Activated CD4-positive, alpha-beta T cell treated with anti-CD3 and anti-CD28 coated beads, Interleukin-2, amount 10 ng/mL, durations not matched to agents 24 days and 14 days (primary cell): ENCODE measurements at regions of chr12 and their contacts with region 1.

Region 1: DNA sequence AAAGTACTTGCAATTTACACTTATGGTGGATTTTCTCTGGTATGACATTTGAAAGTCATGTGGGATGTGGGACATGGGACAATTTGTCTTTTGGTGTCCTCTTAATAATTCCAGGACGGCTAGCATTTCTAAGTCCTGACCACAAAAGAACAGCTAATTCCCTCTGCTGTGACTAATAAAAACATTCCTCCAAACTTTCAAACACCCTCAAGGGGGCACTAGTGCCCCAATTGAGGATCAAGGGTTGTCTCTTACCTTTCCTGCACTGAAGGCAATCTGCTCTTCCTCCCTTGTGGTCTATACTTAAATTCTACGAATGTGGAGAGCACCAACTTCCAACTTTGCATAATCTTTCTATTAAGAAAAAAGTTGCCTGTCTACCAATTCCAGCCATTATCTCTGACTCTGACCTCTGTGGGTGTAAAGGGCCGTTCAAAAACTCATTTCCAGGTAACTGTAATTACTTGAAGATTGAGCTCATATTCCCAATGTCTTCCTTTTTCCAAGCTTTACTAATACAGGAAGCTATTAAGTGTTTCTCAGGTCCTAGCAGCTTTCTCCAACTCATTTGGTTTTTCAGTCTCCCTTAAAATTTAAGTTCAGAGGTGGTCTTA is 210.2 kb downstream of the PTPRO start:
- DNase-seq: peak; percentile 89
- H3K4me3 Mint-ChIP-seq: no peak overlapping the region
- H3K27ac Mint-ChIP-seq: no peak overlapping the region
- H3K4me1 Mint-ChIP-seq: peaks cover 13% of the 10 kb centered on the region
- H3K27me3 Mint-ChIP-seq: peaks cover 18% of the 10 kb centered on the region

Region 2: GRCh38 chr12:15546102-15546701 is 13.7 kb after region 1 on chr12:
- intact Hi-C with region 1: loop called (anchors 2 kb)
- DNase-seq: peak; percentile 80
- H3K4me3 Mint-ChIP-seq: peak overlapping the region; percentile 58
- H3K27ac Mint-ChIP-seq: peak overlapping the region; percentile 87
- H3K4me1 Mint-ChIP-seq: peaks cover 42% of the 10 kb centered on the region
- H3K27me3 Mint-ChIP-seq: no peaks in the 10 kb centered on the region

Region 3: DNA sequence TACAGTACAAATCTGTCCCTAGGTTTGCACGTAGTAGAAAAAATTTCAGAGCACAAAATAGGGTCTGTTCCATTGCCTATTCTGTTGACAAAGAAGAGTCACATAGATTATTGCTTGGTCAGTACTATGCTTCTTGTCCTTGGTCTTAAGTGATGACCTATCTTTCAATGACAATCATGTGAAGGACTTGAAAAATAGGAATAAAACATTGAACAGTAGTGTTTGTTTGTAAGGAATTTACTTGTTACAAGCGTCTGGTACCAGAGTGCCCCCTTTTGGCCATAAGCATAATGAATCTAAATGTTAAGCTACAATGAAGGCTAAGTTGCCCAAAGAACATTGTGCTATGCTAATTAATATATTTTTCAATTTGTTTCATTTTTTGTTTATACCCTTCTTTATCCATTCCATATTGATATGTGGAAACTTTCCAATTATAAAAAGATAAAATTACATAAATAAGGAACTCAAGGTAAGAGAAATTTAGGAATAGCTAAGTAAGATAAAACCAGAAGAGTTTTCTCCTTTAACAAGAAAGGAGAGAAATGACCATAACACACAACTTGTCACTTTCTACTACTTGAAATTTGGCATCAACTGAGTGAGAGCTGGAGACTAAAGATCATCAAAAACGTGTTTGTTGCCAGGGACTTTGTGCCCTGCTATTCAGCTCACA is 52.0 kb after region 1 on chr12:
- intact Hi-C with region 1: loop called (anchors 1 kb)
- DNase-seq: peak; percentile 79
- H3K4me3 Mint-ChIP-seq: no peak overlapping the region
- H3K27ac Mint-ChIP-seq: no peak overlapping the region
- H3K4me1 Mint-ChIP-seq: peaks cover 13% of the 10 kb centered on the region
- H3K27me3 Mint-ChIP-seq: no peaks in the 10 kb centered on the region

Region 4: GRCh38 chr12:15789220-15790171 is 257.0 kb after region 1 on chr12 and contains the start of gene EPS8:
- intact Hi-C with region 1: loop called (anchors 1 kb)
- DNase-seq: peak; percentile 96
- H3K4me3 Mint-ChIP-seq: peak within 1 kb of the TSS; percentile 87
- H3K27ac Mint-ChIP-seq: peak within 1 kb of the TSS; percentile 74
- H3K4me1 Mint-ChIP-seq: peaks cover 12% of the 10 kb centered on the region
- H3K27me3 Mint-ChIP-seq: peaks cover 69% of the 10 kb centered on the region
- total RNA-seq, gene EPS8: 2.2 and 2.4 TPM in 2 replicates

Region 5: GRCh38 chr12:15882118-15882971 is 349.9 kb after region 1 on chr12 and contains the start of gene STRAP:
- intact Hi-C with region 1: loop called (anchors 5 kb)
- DNase-seq: peak; percentile 99
- H3K4me3 Mint-ChIP-seq: peak within 1 kb of the TSS; percentile 97
- H3K27ac Mint-ChIP-seq: peak within 1 kb of the TSS; percentile 94
- H3K4me1 Mint-ChIP-seq: peaks cover 39% of the 10 kb centered on the region
- H3K27me3 Mint-ChIP-seq: peaks cover 3% of the 10 kb centered on the region
- total RNA-seq, gene STRAP: 162 and 166 TPM in 2 replicates